CD4-positive, alpha-beta memory T cell (primary cell): ENCODE measurements at regions of chr19 and their contacts with region 1.

Region 1: GRCh38 chr19:2096480-2097329 is at the start of gene IZUMO4:
- DNase-seq: peak; percentile 98 to 100 (median 99)
- H3K4me3 ChIP-seq: peak within 1 kb of the TSS; percentile 49 to 85
- H3K4me3 Mint-ChIP-seq: peak within 1 kb of the TSS; percentile 91 to 97 (median 96)
- H3K27ac ChIP-seq: peak within 1 kb of the TSS; percentile 81
- H3K27ac Mint-ChIP-seq: peak within 1 kb of the TSS; percentile 95 to 99 (median 96)
- H3K4me1 ChIP-seq: peaks cover 38% of the 10 kb centered on the region
- H3K4me1 Mint-ChIP-seq: peaks cover 12 to 44% (median 28%) of the 10 kb centered on the region in 4 donors
- H3K27me3 ChIP-seq: no peaks in the 10 kb centered on the region
- H3K27me3 Mint-ChIP-seq: no peaks in the 10 kb centered on the region
- total RNA-seq, gene IZUMO4: 18.6 to 22.1 TPM

Region 2: DNA sequence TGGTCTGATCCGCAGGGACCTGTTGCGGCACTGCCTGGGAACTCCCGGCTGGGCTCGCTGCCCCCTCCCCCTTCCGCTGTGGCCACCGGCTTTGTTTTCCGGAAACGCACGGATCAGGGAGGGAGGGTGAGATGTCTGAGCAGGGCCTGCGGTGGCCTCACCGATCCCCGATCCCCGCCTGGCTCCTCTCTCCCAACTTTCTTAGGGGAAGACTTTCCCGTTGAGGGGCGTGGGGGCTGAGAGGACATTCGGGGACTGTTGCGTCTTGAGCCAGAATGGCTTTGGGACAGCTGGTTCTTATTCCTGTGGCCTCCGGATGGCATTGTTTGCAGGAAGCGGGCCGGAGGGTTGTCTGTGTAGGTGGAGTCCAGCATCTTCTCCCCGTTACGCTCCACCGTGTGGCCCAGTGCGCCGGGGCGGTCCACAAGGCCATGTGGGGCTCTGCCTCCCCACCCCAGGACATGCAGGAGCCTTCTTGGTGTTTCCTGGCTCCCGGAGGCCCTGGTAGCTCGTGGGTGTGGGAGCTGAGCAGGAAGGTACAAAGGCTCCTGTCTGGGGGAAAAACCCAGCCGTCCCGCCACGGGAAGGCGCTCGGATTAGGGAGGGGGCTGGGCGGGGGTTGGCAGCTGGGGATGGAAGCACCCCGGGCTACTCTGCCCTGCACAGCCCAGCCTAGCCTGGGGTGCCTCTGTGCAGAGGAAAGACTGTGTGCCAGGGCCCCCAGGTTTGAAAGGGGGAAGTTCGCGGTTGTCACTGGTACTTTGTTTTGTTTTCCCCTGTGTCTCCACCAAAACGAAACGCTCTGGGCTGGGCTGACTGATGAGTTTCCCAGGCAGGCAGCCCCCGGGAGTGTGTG is 154.4 kb before region 1 on chr19:
- CTCF ChIA-PET with region 1: no interaction called
- POLR2A ChIA-PET with region 1: interaction called, 3 read pairs
- intact Hi-C with region 1: loop called (anchors 1 kb)
- DNase-seq: peak; percentile 78 to 89 (median 84)
- H3K4me3 ChIP-seq: peak overlapping the region; percentile 81 to 99
- H3K4me3 Mint-ChIP-seq: peak overlapping the region; percentile 90 to 99 (median 97)
- H3K27ac ChIP-seq: peak overlapping the region; percentile 91
- H3K27ac Mint-ChIP-seq: peak overlapping the region; percentile 97 to 100 (median 99)
- H3K4me1 ChIP-seq: peaks cover 45% of the 10 kb centered on the region
- H3K4me1 Mint-ChIP-seq: peaks cover 15 to 49% (median 33%) of the 10 kb centered on the region in 4 donors
- H3K27me3 ChIP-seq: no peaks in the 10 kb centered on the region
- H3K27me3 Mint-ChIP-seq: peaks cover 0 to 2% of the 10 kb centered on the region in 2 donors

Region 3: DNA sequence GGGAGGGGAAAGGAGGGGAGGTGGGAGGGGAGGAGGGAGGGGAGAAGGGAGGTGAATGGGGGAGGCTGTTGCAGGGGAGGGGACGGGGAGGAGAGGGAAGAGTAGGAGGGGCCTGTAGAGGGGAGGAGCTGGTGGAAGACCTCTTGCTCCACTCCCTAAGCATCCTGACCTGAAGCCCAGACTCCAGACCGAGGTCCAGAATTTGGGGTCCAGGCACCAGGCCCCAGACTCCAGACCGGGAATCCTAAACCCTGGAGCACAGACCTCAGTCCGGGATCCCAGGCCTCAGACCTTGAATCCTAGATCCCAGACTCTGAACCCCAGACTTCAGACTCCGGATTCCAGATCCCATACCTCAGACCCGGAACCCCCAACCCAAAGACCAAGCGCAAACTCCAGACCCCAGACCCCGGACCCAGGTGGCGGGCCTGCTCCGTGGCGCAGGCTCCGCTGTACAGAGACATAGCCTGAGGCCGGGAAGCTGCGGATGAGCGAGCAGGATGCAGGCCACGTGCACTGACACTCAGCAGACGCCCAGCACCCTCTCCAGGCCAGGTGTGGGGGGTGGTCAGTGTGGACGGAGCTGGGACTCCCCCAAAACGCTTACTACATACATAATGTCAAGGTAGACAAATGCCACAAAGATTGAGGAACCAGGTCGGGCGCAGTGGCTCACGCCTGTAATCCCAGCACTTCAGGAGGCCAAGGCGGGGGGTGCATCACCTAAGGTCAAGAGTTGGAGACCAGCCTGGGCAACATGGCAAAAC is 80.5 kb before region 1 on chr19:
- CTCF ChIA-PET with region 1: interaction called, 7 read pairs
- POLR2A ChIA-PET with region 1: interaction called, 11 read pairs
- intact Hi-C with region 1: loop called (anchors 1 kb)
- DNase-seq: peak; percentile 43 to 78 (median 55)
- H3K4me3 ChIP-seq: no peak overlapping the region
- H3K4me3 Mint-ChIP-seq: peak overlapping the region; percentile 43 to 65 (median 60)
- H3K27ac ChIP-seq: peak overlapping the region; percentile 18
- H3K27ac Mint-ChIP-seq: peak overlapping the region in 6 of 7 donors; percentile 36 to 91 (median 64)
- H3K4me1 ChIP-seq: peaks cover 16% of the 10 kb centered on the region
- H3K4me1 Mint-ChIP-seq: peaks cover 7 to 25% (median 16%) of the 10 kb centered on the region in 4 donors
- H3K27me3 ChIP-seq: no peaks in the 10 kb centered on the region
- H3K27me3 Mint-ChIP-seq: no peaks in the 10 kb centered on the region